ENCODE measurements at regions of chr4 and their contacts with region 1.

Region 1: DNA sequence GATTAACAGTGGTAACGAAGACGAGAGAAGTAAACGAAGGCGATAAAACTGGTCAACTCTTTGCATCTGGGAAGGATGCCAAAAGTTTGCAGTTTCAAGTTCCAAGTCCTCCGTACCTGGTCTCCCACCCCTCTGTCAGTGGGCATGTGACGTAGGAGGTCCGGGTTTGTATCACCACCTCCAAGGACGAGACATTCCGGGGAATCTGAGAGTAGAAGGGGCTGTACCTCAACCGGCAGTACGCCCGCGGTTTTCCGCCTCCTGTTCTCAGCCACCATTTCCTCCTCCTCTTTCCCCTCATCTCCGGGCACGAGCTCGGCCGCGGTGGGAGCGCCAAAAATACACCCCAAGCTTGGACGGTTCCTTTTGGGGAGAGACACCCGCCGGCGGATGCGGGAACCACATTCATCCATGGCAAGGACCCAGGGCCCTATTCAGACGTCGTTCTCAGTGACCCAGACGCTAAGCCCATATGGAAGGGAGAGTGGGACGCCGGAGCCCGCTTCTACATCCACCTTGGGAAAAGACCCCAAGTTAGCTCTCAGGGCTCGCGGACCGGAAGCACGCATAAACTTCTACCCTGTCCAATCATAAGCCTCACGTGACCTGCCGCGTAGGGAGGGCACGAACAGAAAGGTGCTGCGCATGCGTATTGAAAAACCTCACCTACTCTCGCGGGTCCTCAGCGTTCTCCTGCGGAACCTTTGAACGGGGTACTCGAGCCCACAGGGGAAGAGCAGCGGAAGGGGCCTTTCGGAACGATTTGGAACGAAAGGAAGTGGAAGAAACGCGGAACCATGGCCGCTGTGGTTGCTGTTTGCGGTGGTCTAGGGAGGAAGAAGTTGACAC is at the starts of genes HELQ and MRPS18C:
- DNase-seq: peak; percentile 98
- ATAC-seq: peak; percentile 99 to 100
- H3K4me3 ChIP-seq: peak within 1 kb of the TSS; percentile 79 to 98 (median 92)
- H3K27ac ChIP-seq: peak within 1 kb of the TSS; percentile 93 to 99 (median 98)
- H3K4me1 ChIP-seq: peaks cover 20 to 31% of the 10 kb centered on the region in 2 donors
- H3K27me3 ChIP-seq: no peaks in the 10 kb centered on the region
- CTCF ChIP-seq: peak in 3 of 5 experiments; percentile 7 to 44 (median 19)
- POLR2A ChIP-seq: peak; percentile 77 to 78
- total RNA-seq, gene HELQ: 13.1 to 18.4 (median 15.5) TPM
- total RNA-seq, gene MRPS18C: 22.2 to 57.9 (median 33.8) TPM

Region 2: GRCh38 chr4:82373816-82374625 is 1081.5 kb before region 1 on chr4 and contains the start of gene HNRNPD:
- in situ Hi-C with region 1: no loop called
- intact Hi-C with region 1: loop called (anchors 5 kb)
- DNase-seq: peak; percentile 97 to 99
- ATAC-seq: peak; percentile 90 to 91
- H3K4me3 ChIP-seq: peak within 1 kb of the TSS; percentile 82 to 99 (median 96)
- H3K27ac ChIP-seq: peak within 1 kb of the TSS; percentile 99 to 100 (median 100)
- H3K4me1 ChIP-seq: peaks cover 42 to 44% of the 10 kb centered on the region in 2 donors
- H3K27me3 ChIP-seq: no peaks in the 10 kb centered on the region
- CTCF ChIP-seq: peak in 2 of 5 experiments; percentile 20 to 21
- POLR2A ChIP-seq: peak; percentile 92 to 95
- total RNA-seq, gene HNRNPD: 26.9 to 46.0 (median 37.4) TPM

Region 3: GRCh38 chr4:82851885-82852750 is 603.4 kb before region 1 on chr4:
- in situ Hi-C with region 1: loop called in 1 of 4 experiments (anchors 25 kb)
- intact Hi-C with region 1: no loop called
- DNase-seq: no peak
- ATAC-seq: peak in 1 of 2 donors; percentile 60
- H3K4me3 ChIP-seq: no peak overlapping the region
- H3K27ac ChIP-seq: no peak overlapping the region
- H3K4me1 ChIP-seq: no peaks in the 10 kb centered on the region
- H3K27me3 ChIP-seq: no peaks in the 10 kb centered on the region
- CTCF ChIP-seq: peak in 2 of 5 experiments; percentile 23 to 36
- POLR2A ChIP-seq: no peak

Region 4: GRCh38 chr4:83012687-83013419 is 442.7 kb before region 1 on chr4:
- in situ Hi-C with region 1: loop called in 1 of 4 experiments (anchors 25 kb)
- intact Hi-C with region 1: no loop called
- DNase-seq: peak; percentile 93 to 96
- ATAC-seq: peak; percentile 90
- H3K4me3 ChIP-seq: peak overlapping the region; percentile 70 to 94 (median 79)
- H3K27ac ChIP-seq: peak overlapping the region; percentile 90 to 96 (median 94)
- H3K4me1 ChIP-seq: peaks cover 27 to 33% of the 10 kb centered on the region in 2 donors
- H3K27me3 ChIP-seq: no peaks in the 10 kb centered on the region
- CTCF ChIP-seq: peak; percentile 37 to 64 (median 53)
- POLR2A ChIP-seq: peak; percentile 86 to 93

Region 5: DNA sequence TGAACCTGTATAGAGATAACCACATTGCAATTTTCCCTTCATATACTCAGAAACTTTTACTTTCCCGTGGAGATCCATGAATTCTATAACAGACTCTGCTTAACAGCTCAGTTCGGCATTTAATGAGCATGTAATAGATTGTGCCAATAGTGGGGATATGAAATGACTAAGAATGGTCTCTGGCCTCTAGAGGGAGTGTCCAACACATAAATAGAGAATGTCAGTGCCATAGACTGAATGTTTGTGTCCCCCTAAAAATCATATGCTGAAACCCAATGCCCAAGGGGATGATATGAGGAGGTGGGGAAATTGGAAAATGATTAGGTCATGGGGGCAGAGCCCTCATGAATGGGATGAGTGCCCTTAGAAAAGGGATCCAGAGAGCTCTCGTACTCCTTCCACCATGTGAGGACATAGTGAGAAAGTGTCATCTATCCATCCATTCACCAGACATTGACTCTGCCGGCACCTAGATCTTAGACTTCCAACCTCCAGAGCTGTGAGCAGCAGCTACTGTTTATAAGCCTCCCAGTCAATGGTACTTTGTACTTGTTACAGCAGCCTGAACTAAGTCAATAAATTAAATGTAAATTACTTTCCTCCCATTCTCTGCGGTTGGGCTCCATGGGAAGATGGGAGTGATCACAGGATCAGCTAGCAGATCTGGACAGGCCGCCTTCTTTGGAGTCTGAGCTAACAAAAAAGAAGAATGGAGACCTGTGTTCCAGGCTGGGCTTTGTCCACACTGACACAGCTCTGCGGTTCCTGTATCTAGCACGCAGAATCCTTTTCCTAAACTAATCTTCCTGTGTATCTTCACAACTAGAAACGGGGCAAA is 92.8 kb before region 1 on chr4:
- in situ Hi-C with region 1: no loop called
- intact Hi-C with region 1: loop called (anchors 1 kb)
- DNase-seq: no peak
- ATAC-seq: peak in 1 of 2 donors; percentile 36
- H3K4me3 ChIP-seq: no peak overlapping the region
- H3K27ac ChIP-seq: no peak overlapping the region
- H3K4me1 ChIP-seq: peaks cover 0 to 3% of the 10 kb centered on the region in 2 donors
- H3K27me3 ChIP-seq: no peaks in the 10 kb centered on the region
- CTCF ChIP-seq: no peak
- POLR2A ChIP-seq: no peak

Region 6: GRCh38 chr4:83767067-83767466 is 311.6 kb after region 1 on chr4:
- in situ Hi-C with region 1: no loop called
- intact Hi-C with region 1: no loop called
- DNase-seq: no peak
- ATAC-seq: no peak
- H3K4me3 ChIP-seq: no peak overlapping the region
- H3K27ac ChIP-seq: no peak overlapping the region
- H3K4me1 ChIP-seq: no peaks in the 10 kb centered on the region
- H3K27me3 ChIP-seq: no peaks in the 10 kb centered on the region
- CTCF ChIP-seq: no peak
- POLR2A ChIP-seq: no peak